ENCODE measurements at regions of chr7 and their contacts with region 1.

Region 1: GRCh38 chr7:30983042-30983913 is 19.5 kb downstream of the GHRHR start:
- DNase-seq: peak; percentile 89
- ATAC-seq: peak; percentile 90
- H3K4me3 ChIP-seq: no peak overlapping the region
- H3K27ac ChIP-seq: no peak overlapping the region
- H3K4me1 ChIP-seq: peaks cover 7% of the 10 kb centered on the region; the same call in 1 of the 2 replicates
- H3K27me3 ChIP-seq: peaks cover 27% of the 10 kb centered on the region
- CTCF ChIP-seq: peak; percentile 86

Region 2: DNA sequence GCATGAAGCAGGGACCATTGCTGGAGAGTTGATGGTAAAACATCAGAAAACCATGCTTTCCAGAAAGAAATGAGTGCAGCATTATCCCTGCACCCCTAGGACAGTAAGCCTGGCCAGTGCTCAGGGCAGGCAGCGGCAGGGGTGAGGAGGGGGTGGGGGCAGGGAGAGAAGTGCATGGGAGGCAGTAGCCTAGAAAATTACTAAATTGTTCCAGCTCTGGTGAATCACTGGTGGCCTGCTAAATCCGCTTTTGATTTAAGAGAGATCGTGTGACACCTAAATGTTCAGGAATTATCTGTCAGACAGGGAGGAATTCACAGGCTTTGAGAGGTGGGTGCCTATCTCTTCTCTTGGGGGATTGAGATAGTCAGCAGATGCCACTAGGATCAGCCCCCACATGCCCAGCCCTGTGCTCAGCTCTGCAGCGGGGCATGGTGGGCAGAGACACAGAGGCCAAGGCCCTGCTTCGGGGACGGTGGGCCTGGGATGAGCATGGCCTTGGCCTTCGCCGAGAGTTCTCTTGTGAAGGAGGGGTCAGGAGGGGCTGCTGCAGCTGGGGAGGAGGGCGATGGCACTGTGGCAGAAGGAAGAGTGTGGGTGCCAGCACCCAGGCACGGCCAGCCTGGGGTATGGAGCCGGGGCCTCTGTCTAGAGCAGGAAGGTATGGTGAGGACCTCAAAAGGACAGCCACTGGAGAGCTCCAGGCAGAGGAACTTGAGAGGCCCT is 76.6 kb before region 1 on chr7:
- CTCF ChIA-PET with region 1: no interaction called
- POLR2A ChIA-PET with region 1: no interaction called
- intact Hi-C with region 1: no loop called
- DNase-seq: peak; percentile 21
- ATAC-seq: no peak
- H3K4me3 ChIP-seq: no peak overlapping the region
- H3K27ac ChIP-seq: no peak overlapping the region
- H3K4me1 ChIP-seq: peaks cover 10% of the 10 kb centered on the region
- H3K27me3 ChIP-seq: no peaks in the 10 kb centered on the region
- CTCF ChIP-seq: no peak

Region 3: GRCh38 chr7:30998180-30998579 is 14.9 kb after region 1 on chr7:
- CTCF ChIA-PET with region 1: no interaction called
- POLR2A ChIA-PET with region 1: interaction called, 17 read pairs
- intact Hi-C with region 1: no loop called
- DNase-seq: no peak
- ATAC-seq: no peak
- H3K4me3 ChIP-seq: no peak overlapping the region
- H3K27ac ChIP-seq: no peak overlapping the region
- H3K4me1 ChIP-seq: no peaks in the 10 kb centered on the region
- H3K27me3 ChIP-seq: 0 out of 2 replicates have a peak, but pooled peaks cover 16% of the 10 kb centered on the region
- CTCF ChIP-seq: no peak

Region 4: DNA sequence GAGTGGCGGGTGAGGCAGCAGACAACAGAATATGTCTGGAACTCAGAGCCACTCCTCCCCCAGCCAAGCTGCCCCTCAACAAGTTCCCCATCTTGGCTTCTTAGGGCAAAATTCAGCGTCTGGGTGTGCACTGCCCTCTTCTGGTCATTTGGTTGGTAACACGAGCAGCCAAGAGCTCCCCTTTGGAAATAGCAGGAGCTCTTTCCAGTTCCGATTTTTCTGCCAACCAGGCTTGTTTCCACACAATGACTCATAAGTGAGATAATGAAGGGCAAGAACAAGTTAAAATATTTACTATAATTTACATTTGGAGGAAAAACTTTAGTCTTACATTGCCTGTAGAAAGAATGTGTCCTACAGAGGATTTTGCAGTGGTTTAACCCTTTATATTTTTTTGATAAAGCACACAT is 139.4 kb after region 1 on chr7:
- CTCF ChIA-PET with region 1: interaction called, 112 read pairs
- POLR2A ChIA-PET with region 1: interaction called, 19 read pairs
- intact Hi-C with region 1: loop called (anchors 1 kb)
- DNase-seq: peak; percentile 88
- ATAC-seq: peak; percentile 84
- H3K4me3 ChIP-seq: no peak overlapping the region
- H3K27ac ChIP-seq: no peak overlapping the region
- H3K4me1 ChIP-seq: no peaks in the 10 kb centered on the region
- H3K27me3 ChIP-seq: peaks cover 16% of the 10 kb centered on the region
- CTCF ChIP-seq: peak; percentile 86

Measured in PC-3 (cell line).